ENCODE measurements at regions of chr19 and their contacts with region 1.

Region 1: GRCh38 chr19:10864538-10864899 is 6.8 kb upstream of the CARM1 start:
- DNase-seq: peak; percentile 88
- CTCF ChIP-seq: peak; percentile 93

Region 2: GRCh38 chr19:10701955-10702525 is 162.5 kb before region 1 on chr19:
- CTCF ChIA-PET with region 1: interaction called, 13 read pairs
- POLR2A ChIA-PET with region 1: no interaction called
- DNase-seq: peak; percentile 63
- CTCF ChIP-seq: peak; percentile 8

Region 3: GRCh38 chr19:10835754-10836477 is 28.6 kb before region 1 on chr19 and contains the start of gene TMED1:
- CTCF ChIA-PET with region 1: interaction called, 45 read pairs
- POLR2A ChIA-PET with region 1: no interaction called
- DNase-seq: peak; percentile 95
- CTCF ChIP-seq: no peak

Region 4: GRCh38 chr19:10842788-10843187 is 21.7 kb before region 1 on chr19:
- CTCF ChIA-PET with region 1: interaction called, 45 read pairs
- POLR2A ChIA-PET with region 1: no interaction called
- DNase-seq: no peak
- CTCF ChIP-seq: no peak

Region 5: DNA sequence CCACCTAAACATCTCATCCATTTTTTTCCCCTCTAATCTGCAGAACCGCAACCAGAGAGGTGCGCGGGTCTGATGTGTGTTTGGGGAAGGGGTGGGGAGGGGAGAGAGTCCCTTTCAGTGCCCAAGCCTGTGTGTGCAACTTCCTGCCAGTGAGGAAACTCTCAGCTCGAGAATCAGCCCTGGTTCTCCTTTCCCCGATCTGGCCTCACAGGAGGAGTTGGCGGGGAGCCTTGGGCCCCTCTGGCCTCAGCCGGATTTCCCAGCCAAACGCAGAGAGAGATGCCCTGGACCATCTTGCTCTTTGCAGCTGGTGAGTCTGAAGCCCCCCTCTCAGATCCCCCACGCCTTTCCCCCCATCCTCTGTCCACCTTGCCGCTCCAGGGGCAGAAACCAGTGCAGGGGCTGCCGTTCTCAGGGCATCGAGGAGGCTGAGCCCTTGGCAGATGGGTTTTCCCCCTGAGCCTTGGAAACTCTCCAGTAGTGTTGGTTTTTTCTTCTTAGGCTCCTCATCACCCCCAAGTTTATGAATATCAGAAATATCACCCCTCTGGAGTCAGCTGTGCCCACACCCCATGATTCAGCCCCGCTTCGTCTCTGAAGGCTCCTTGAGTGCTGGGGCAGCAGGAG is 16.2 kb before region 1 on chr19 and contains the start of gene C19orf38:
- CTCF ChIA-PET with region 1: interaction called, 71 read pairs
- POLR2A ChIA-PET with region 1: no interaction called
- DNase-seq: peak; percentile 48
- CTCF ChIP-seq: no peak

Region 6: DNA sequence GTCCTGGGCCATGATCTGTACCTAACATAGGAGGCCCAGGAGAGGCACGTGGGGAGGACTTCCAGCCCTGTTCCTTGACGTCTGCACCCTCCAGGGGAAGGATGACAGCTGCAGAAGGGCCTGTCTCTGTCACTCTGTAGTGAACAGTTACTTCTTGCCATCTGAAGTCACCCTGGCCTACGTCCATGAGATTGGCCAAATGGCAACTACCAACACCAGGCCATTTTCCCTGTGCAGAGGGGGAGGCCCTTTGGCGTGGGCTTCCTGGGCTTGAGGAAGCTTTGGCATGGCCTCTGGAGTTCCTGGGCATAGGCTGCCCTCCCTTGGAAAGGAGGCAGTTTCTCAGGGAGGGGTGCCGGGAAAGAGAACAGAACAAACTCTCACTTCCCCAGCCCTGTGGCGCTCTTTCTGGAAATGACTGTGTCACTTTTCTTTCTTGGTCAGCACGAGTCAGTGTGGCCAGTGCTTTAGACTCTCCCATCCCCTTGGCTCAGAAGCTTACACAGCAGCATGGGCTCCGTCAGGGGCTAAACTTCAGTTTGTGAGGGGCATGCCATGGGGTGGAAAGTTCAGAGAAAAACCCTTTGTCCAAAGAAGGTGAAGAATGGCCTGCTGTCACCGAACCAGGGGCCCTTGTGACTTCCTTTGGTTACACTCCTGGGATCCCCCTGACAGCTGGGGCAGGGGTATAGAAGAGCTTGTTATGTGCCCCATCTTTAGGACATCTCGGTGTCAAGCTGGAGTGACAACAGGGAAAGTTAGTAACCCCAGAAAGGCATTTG is 12.1 kb after region 1 on chr19:
- CTCF ChIA-PET with region 1: interaction called, 26 read pairs
- POLR2A ChIA-PET with region 1: no interaction called
- DNase-seq: peak; percentile 74
- CTCF ChIP-seq: peak; percentile 3

Region 7: GRCh38 chr19:10884274-10884673 is 19.8 kb after region 1 on chr19:
- CTCF ChIA-PET with region 1: interaction called, 11 read pairs
- POLR2A ChIA-PET with region 1: no interaction called
- DNase-seq: no peak
- CTCF ChIP-seq: no peak

Region 8: GRCh38 chr19:11152318-11153062 is 288.0 kb after region 1 on chr19:
- CTCF ChIA-PET with region 1: no interaction called
- POLR2A ChIA-PET with region 1: no interaction called
- DNase-seq: no peak
- CTCF ChIP-seq: no peak

Measured in GM10248 (cell line).